Esophagus squamous epithelium (tissue), 5 donors: ENCODE measurements at regions of chr1 and their contacts with region 1.

Region 1: DNA sequence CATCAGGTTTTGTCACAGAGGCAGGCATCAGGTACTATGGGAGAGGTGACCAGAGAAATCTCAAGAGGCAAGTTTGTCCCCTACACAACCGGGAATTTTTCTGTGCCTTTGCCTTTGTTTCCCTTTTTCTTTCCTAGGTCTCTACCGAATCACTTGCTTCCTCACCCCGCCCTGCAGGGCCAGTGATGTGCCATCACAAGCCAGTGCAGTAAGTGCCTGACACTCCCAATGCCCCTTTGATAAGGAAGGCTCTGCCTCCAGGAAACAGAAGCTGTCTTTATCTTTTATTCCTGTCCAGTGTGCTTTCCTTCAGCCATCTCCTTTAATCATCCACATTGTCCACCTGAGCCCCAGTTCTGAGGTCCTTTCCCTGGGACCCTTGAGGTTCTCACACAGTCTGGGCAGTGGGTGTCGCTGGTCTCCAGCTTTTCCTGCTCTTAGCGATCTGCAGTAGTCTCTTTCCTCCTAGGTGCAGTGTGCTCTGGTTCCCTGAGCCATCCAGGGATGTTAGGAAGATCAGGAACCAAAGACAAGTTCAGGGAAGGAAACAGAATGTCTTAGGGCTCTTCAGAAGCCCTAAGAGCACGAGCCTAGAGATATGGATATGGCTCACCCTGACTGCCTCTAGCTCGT is 36.6 kb downstream of the GJA5 start:
- DNase-seq: no peak
- H3K4me3 ChIP-seq: no peak overlapping the region
- H3K27ac ChIP-seq: no peak overlapping the region
- H3K4me1 ChIP-seq: peaks cover 3 to 32% (median 6%) of the 10 kb centered on the region in 3 donors
- H3K27me3 ChIP-seq: peaks cover 0 to 22% (median 0%) of the 10 kb centered on the region in 4 donors
- CTCF ChIP-seq: peak in 5 of 6 experiments; percentile 23 to 47 (median 43)
- POLR2A ChIP-seq: no peak

Region 2: DNA sequence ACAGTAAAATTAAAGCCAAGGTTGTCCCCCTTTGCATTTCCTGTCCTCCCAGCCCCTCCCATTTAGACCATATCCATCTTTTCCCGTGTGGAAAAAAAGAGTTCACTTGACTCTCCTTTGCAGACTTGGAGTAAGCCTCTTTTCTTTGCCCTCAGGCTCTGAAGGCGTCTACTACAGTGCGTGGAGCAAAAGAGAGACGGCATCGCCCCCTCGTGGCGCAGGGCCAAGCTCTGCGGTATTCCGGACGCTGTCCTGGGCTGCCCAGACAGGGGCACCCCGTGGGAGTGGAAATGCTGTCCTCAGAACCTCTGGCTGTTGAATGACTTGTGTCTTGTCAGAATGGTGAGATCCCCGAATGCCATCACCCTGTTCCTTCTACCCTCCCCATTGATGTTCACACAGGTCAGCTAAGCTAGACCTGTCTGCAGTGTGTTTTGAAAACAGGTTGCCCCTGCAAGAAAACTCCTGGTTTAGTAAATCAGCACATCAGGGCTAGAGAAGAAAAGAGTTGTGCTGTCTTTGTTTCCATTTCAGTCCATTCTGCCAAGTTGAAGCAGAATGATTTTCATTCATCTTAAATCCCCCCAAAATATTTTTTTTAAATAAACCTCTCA is 166.5 kb after region 1 on chr1:
- intact Hi-C with region 1: loop called (anchors 5 kb)
- DNase-seq: no peak
- H3K4me3 ChIP-seq: no peak overlapping the region
- H3K27ac ChIP-seq: no peak overlapping the region
- H3K4me1 ChIP-seq: peaks cover 0 to 10% (median 0%) of the 10 kb centered on the region in 3 donors
- H3K27me3 ChIP-seq: peaks cover 0 to 12% (median 0%) of the 10 kb centered on the region in 4 donors
- CTCF ChIP-seq: peak in 5 of 6 experiments; percentile 34 to 71 (median 53)
- POLR2A ChIP-seq: no peak